ENCODE measurements at regions of chr2 and their contacts with region 1.

Region 1: GRCh38 chr2:41782306-41783158 is 265.3 kb upstream of the PKDCC start:
- DNase-seq: peak in 1 of 2 donors; percentile 16
- ATAC-seq: peak in 2 of 8 donors; percentile 20 to 48
- H3K4me3 ChIP-seq: no peak overlapping the region
- H3K27ac ChIP-seq: no peak overlapping the region
- H3K4me1 ChIP-seq: peaks cover 0 to 5% (median 0%) of the 10 kb centered on the region in 9 donors
- H3K27me3 ChIP-seq: peaks cover 0 to 5% (median 0%) of the 10 kb centered on the region in 7 donors
- CTCF ChIP-seq: peak; percentile 77 to 95 (median 86)

Region 2: GRCh38 chr2:39902103-39902502 is 1880.4 kb before region 1 on chr2:
- intact Hi-C with region 1: loop called in 1 of 10 experiments (anchors 10 kb)
- DNase-seq: no peak
- ATAC-seq: no peak
- H3K4me3 ChIP-seq: no peak overlapping the region
- H3K27ac ChIP-seq: no peak overlapping the region
- H3K4me1 ChIP-seq: no peaks in the 10 kb centered on the region
- H3K27me3 ChIP-seq: no peaks in the 10 kb centered on the region
- CTCF ChIP-seq: no peak

Region 3: GRCh38 chr2:41414486-41415230 is 367.9 kb before region 1 on chr2:
- intact Hi-C with region 1: loop called in 3 of 10 experiments (anchors 10 kb)
- DNase-seq: no peak
- ATAC-seq: peak in 5 of 8 donors; percentile 31 to 63 (median 42)
- H3K4me3 ChIP-seq: no peak overlapping the region
- H3K27ac ChIP-seq: peak overlapping the region in 1 of 10 donors; percentile 7
- H3K4me1 ChIP-seq: peaks cover 0 to 9% (median 0%) of the 10 kb centered on the region in 9 donors
- H3K27me3 ChIP-seq: no peaks in the 10 kb centered on the region
- CTCF ChIP-seq: peak; percentile 35 to 69 (median 60)

Region 4: DNA sequence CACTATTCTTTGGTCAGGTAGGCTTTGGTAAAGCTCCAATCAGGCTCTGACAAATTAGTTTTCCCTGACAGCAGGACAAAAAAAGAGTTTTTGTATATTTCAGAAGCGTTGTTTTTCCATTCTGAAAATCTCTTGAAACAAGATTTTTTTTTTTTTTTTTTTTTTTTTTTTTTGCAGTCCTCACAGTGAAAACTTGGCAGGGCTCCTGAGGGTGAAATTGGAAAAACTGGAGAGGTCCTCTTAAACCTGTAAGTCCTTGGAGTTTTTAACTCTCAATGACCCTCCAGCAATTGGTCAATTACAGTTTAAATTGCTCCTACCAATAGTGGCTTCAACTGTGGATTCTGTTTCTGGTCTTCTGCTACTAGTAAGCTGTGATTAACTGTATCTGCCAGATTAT is 20.8 kb after region 1 on chr2:
- intact Hi-C with region 1: no loop called
- DNase-seq: no peak
- ATAC-seq: no peak
- H3K4me3 ChIP-seq: no peak overlapping the region
- H3K27ac ChIP-seq: no peak overlapping the region
- H3K4me1 ChIP-seq: no peaks in the 10 kb centered on the region
- H3K27me3 ChIP-seq: no peaks in the 10 kb centered on the region
- CTCF ChIP-seq: no peak

Measured in heart right ventricle (tissue), 16 donors.